ENCODE measurements at regions of chr6 and their contacts with region 1.

Region 1: GRCh38 chr6:147390909-147391536 is 117.5 kb upstream of the SAMD5 start:
- DNase-seq: peak; percentile 21
- ATAC-seq: peak; percentile 63
- H3K4me3 ChIP-seq: no peak overlapping the region
- H3K27ac ChIP-seq: no peak overlapping the region
- H3K4me1 ChIP-seq: no peaks in the 10 kb centered on the region
- H3K27me3 ChIP-seq: no peaks in the 10 kb centered on the region
- CTCF ChIP-seq: peak; percentile 36 to 65 (median 56); a peak in 5 of 6 replicates
- POLR2A ChIP-seq: no peak
- RAD21 ChIP-seq: peak; percentile 81

Region 2: GRCh38 chr6:147372806-147373205 is 18.2 kb before region 1 on chr6:
- CTCF ChIA-PET with region 1: no interaction called
- POLR2A ChIA-PET with region 1: no interaction called
- RAD21 ChIA-PET with region 1: no interaction called
- intact Hi-C with region 1: no loop called
- DNase-seq: no peak
- ATAC-seq: no peak
- H3K4me3 ChIP-seq: no peak overlapping the region
- H3K27ac ChIP-seq: no peak overlapping the region
- H3K4me1 ChIP-seq: no peaks in the 10 kb centered on the region
- H3K27me3 ChIP-seq: no peaks in the 10 kb centered on the region
- CTCF ChIP-seq: no peak
- POLR2A ChIP-seq: no peak
- RAD21 ChIP-seq: no peak

Region 3: GRCh38 chr6:147468634-147469033 is 77.6 kb after region 1 on chr6:
- CTCF ChIA-PET with region 1: no interaction called
- POLR2A ChIA-PET with region 1: no interaction called
- RAD21 ChIA-PET with region 1: no interaction called
- intact Hi-C with region 1: loop called (anchors 5 kb)
- DNase-seq: no peak
- ATAC-seq: peak; percentile 72
- H3K4me3 ChIP-seq: no peak overlapping the region
- H3K27ac ChIP-seq: no peak overlapping the region
- H3K4me1 ChIP-seq: no peaks in the 10 kb centered on the region
- H3K27me3 ChIP-seq: no peaks in the 10 kb centered on the region
- CTCF ChIP-seq: peak in 2 of 3 experiments; percentile 23 to 24; a peak in 1 of 6 replicates
- POLR2A ChIP-seq: no peak
- RAD21 ChIP-seq: no peak

Region 4: DNA sequence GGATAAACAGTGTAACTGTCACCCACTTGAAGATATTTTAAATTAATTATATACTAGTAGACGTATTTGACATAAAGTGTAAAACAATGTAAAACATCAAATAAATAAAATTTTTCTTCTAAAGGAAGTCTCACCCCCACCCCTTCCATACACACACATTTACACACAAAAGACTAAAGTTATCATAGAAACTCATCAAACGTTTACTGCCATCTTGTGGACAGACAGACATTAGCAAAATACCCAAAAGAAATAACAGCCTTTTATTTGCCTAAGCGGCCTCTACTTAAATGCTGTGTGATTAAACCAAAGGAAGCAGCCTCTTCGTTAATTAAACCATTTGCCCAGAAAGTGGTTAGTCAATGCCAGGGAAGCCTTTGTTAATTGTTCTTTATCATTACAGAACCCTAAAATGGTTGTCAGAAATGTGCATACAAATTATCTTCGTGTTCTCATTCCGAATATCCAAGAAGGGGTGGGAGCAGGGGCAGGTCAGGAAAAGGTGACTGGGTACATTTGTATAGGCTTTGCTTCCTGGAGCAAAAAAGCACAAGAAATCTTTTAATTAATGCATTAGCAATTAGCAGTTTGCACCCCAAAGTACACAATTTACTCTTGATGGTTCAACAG is 775.4 kb after region 1 on chr6:
- CTCF ChIA-PET with region 1: interaction called, 3 read pairs
- POLR2A ChIA-PET with region 1: no interaction called
- RAD21 ChIA-PET with region 1: no interaction called
- intact Hi-C with region 1: loop called (anchors 1 kb)
- DNase-seq: peak; percentile 51
- ATAC-seq: peak; percentile 72
- H3K4me3 ChIP-seq: no peak overlapping the region
- H3K27ac ChIP-seq: no peak overlapping the region
- H3K4me1 ChIP-seq: no peaks in the 10 kb centered on the region
- H3K27me3 ChIP-seq: no peaks in the 10 kb centered on the region
- CTCF ChIP-seq: peak; percentile 52 to 79 (median 70)
- POLR2A ChIP-seq: no peak
- RAD21 ChIP-seq: peak; percentile 88

Region 5: DNA sequence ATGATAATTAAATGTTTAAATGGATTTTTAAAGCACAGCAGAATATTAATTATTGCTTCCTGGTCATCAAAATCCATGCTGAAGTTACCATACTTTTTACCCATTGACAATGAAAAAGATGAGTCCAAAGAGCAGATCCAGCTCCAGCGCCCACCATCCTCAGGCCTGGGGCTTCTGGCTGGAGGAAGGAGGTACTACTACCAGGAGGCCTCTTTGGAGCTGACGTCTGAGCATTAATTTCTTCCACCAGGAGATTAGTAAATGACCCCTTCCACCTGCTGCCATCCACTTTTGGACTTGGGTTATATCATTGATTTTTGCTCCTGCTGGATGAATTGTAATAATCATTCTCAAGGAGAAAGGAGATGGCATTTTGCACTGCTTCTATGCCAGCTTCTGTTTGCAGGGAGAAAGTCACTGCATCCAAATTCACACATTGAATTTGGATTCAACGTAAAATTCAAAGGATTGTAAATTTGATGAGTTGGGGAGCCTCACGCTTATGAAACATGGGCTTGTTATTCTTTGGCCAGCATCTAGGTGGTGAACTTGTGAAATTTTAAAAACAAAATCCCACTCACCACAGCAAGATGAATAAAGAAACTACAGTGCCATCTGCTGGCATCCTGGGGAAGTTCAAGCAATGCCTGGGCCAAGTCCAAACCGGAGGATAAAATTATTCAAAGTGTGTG is 1073.4 kb after region 1 on chr6:
- CTCF ChIA-PET with region 1: no interaction called
- POLR2A ChIA-PET with region 1: no interaction called
- RAD21 ChIA-PET with region 1: no interaction called
- intact Hi-C with region 1: loop called (anchors 2 kb)
- DNase-seq: peak; percentile 48
- ATAC-seq: peak; percentile 88
- H3K4me3 ChIP-seq: no peak overlapping the region
- H3K27ac ChIP-seq: no peak overlapping the region
- H3K4me1 ChIP-seq: no peaks in the 10 kb centered on the region
- H3K27me3 ChIP-seq: no peaks in the 10 kb centered on the region
- CTCF ChIP-seq: peak; percentile 85 to 97 (median 96)
- POLR2A ChIP-seq: no peak
- RAD21 ChIP-seq: peak; percentile 93